ENCODE measurements at regions of chr9 and their contacts with region 1.

Region 1: DNA sequence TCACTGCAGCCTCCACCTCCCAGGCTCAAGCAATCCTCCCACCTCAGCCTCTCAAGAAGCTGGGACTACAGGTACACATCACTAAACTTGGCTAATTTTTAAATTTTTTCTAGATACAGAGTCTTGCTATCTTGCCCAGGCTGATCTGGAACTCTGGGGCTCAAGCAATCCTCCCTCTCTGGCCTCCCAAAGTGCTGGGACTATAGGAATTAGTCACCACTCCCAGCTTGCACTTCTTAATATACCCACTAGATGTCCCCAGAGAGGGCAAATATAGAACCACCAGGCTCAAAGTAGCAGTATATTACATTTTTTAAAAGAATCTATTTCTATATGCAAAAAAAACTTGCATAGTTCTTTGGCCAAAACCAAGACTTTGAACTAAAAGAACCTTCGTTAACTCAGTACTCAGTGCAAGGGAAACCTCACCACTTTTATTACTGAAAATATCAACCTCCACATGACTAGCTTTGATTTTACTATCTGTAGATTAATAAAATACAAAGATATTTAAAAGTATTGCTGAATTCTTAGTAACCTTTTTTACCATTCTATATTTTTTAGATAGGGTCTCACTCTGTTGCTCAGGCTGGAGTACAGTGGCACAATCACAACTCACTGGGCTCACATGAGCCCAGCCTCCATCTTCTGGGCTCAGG is 25.8 kb upstream of the HSD17B3 start:
- DNase-seq: no peak
- ATAC-seq: peak; percentile 88 to 93 (median 91)
- H3K4me3 ChIP-seq: no peak overlapping the region
- H3K27ac ChIP-seq: peak overlapping the region in 1 of 3 donors; percentile 65
- H3K4me1 ChIP-seq: peaks cover 0 to 12% (median 0%) of the 10 kb centered on the region in 4 donors
- H3K27me3 ChIP-seq: no peaks in the 10 kb centered on the region
- CTCF ChIP-seq: peak; percentile 75 to 90 (median 79)
- POLR2A ChIP-seq: no peak

Region 2: GRCh38 chr9:96418074-96418809 is 90.4 kb after region 1 on chr9 and contains the start of gene ZNF367:
- intact Hi-C with region 1: loop called in 1 of 2 experiments (anchors 10 kb)
- DNase-seq: peak; percentile 98 to 99 (median 99)
- ATAC-seq: peak; percentile 75 to 90 (median 81)
- H3K4me3 ChIP-seq: peak within 1 kb of the TSS; percentile 64 to 88 (median 84)
- H3K27ac ChIP-seq: peak within 1 kb of the TSS; percentile 88 to 94 (median 92)
- H3K4me1 ChIP-seq: peaks cover 0 to 27% (median 15%) of the 10 kb centered on the region in 4 donors
- H3K27me3 ChIP-seq: no peaks in the 10 kb centered on the region
- CTCF ChIP-seq: no peak
- POLR2A ChIP-seq: peak; percentile 66
- total RNA-seq, gene ZNF367: 0.73 to 9.2 (median 2.6) TPM

Region 3: DNA sequence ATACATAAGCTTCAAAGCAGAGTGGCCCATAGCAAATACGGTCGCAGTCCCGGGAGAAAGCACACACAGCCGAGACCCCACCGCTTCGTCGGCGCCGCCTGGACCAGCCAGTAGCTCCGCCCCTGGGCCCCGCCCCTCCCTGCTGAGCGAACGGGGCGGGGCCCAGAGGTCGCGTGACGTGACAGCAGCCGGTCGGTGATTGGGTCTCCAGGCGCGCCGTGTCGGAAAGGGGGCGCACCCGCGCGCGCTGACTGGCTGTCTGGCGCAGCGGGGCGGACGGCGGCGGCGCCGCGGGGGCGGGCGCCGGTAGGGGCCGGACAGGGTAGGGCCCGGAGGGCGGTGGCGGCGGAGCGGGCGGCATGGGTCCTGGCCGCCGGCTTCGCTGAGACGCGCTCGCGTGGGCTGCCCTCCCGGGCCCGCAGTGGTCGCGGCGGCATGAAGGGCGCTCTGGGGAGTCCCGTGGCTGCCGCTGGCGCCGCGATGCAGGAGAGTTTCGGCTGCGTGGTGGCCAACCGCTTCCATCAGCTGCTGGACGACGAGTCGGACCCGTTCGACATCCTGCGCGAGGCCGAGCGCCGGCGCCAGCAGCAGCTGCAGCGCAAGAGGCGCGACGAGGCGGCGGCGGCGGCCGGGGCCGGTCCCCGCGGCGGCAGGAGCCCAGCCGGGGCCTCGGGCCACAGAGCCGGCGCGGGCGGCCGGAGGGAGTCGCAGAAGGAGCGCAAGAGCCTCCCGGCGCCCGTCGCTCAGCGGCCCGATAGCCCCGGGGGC is 122.2 kb after region 1 on chr9 and contains the start of gene HABP4:
- intact Hi-C with region 1: loop called in 1 of 2 experiments (anchors 10 kb)
- DNase-seq: peak; percentile 97 to 98 (median 97)
- ATAC-seq: peak; percentile 98 to 100 (median 99)
- H3K4me3 ChIP-seq: peak within 1 kb of the TSS; percentile 56 to 72 (median 60)
- H3K27ac ChIP-seq: peak within 1 kb of the TSS in 1 of 3 donors; percentile 61
- H3K4me1 ChIP-seq: peaks cover 0 to 9% (median 3%) of the 10 kb centered on the region in 4 donors
- H3K27me3 ChIP-seq: no peaks in the 10 kb centered on the region
- CTCF ChIP-seq: peak in 2 of 4 donors; percentile 24 to 43
- POLR2A ChIP-seq: peak; percentile 91
- total RNA-seq, gene HABP4: 1.4 to 6.2 (median 4.7) TPM

Region 4: GRCh38 chr9:96574931-96575351 is 247.1 kb after region 1 on chr9:
- intact Hi-C with region 1: no loop called
- DNase-seq: peak; percentile 52 to 85 (median 80)
- ATAC-seq: peak; percentile 93 to 95 (median 94)
- H3K4me3 ChIP-seq: peak overlapping the region in 2 of 3 donors; percentile 24 to 40
- H3K27ac ChIP-seq: peak overlapping the region; percentile 3 to 74 (median 73)
- H3K4me1 ChIP-seq: peaks cover 0 to 16% (median 3%) of the 10 kb centered on the region in 4 donors
- H3K27me3 ChIP-seq: no peaks in the 10 kb centered on the region
- CTCF ChIP-seq: no peak
- POLR2A ChIP-seq: no peak

Region 5: GRCh38 chr9:96661711-96662110 is 333.9 kb after region 1 on chr9:
- intact Hi-C with region 1: loop called in 1 of 2 experiments (anchors 10 kb)
- DNase-seq: no peak
- ATAC-seq: no peak
- H3K4me3 ChIP-seq: no peak overlapping the region
- H3K27ac ChIP-seq: no peak overlapping the region
- H3K4me1 ChIP-seq: no peaks in the 10 kb centered on the region
- H3K27me3 ChIP-seq: no peaks in the 10 kb centered on the region
- CTCF ChIP-seq: no peak
- POLR2A ChIP-seq: no peak